A673 (cell line): ENCODE measurements at regions of chr18 and their contacts with region 1.

Region 1: DNA sequence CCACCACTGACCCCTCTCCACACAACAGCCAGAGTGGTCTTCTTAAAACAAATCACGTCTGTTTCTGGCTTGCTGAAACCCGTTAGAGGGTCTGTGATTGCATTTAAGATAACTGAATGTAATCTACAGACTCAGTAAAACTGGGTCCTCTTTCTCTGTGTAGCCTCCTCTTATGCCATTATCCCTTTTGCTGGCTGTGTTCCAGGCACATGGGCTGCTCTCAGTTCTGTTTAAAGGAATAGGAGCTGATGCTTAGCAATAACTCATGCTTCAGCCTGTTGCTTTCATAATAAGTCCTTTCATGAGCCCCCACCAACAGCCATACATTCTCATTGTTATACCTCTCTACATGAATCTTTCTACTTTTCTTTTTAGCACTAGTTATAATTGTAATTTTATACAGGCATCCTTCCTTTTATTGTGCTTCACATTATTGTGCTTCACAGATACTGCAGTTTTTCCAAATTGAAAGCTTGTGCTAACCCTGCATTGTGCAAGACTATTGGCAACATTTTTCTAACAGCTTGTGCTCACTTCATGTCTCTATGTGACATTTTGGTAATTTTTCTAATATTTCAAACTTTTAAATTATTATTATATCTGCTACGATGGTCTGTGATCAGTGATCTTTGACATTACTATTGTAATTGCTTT is 782.6 kb downstream of the MBD2 start:
- DNase-seq: peak; percentile 67
- H3K4me3 ChIP-seq: no peak overlapping the region
- H3K27ac ChIP-seq: no peak overlapping the region
- H3K4me1 ChIP-seq: peaks cover 13% of the 10 kb centered on the region
- H3K27me3 ChIP-seq: no peaks in the 10 kb centered on the region
- CTCF ChIP-seq: no peak

Region 2: DNA sequence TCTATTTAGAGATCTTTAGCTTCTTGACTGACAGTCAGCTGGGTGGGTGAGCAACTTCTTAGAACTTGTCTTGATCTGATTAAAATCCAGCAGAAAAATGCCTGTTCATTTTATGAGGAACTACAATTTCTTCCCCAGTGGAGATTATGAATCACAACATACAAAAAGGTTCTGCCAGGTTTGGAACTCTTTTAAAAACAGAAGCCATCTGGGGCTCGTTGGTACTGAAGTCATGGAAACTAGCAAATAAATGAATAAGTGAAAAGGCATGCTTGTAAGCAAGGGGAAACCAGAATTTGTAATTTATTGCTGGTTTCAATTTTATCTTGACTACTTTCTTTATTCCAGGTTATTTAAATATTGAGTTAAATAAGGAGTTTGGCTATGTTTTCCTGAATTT is 15.2 kb after region 1 on chr18:
- CTCF ChIA-PET with region 1: no interaction called
- POLR2A ChIA-PET with region 1: no interaction called
- intact Hi-C with region 1: loop called (anchors 2 kb)
- DNase-seq: peak; percentile 51
- H3K4me3 ChIP-seq: no peak overlapping the region
- H3K27ac ChIP-seq: no peak overlapping the region
- H3K4me1 ChIP-seq: peaks cover 36% of the 10 kb centered on the region
- H3K27me3 ChIP-seq: no peaks in the 10 kb centered on the region
- CTCF ChIP-seq: no peak